ENCODE measurements at regions of chr17 and their contacts with region 1.

Region 1: GRCh38 chr17:63425482-63425881 is 20.6 kb downstream of the CYB561 start:
- DNase-seq: peak; percentile 55 to 87 (median 62)
- ATAC-seq: peak; percentile 90
- H3K4me3 ChIP-seq: no peak overlapping the region
- H3K4me3 Mint-ChIP-seq: no peak overlapping the region
- H3K27ac ChIP-seq: no peak overlapping the region
- H3K27ac Mint-ChIP-seq: no peak overlapping the region
- H3K4me1 ChIP-seq: peaks cover 51% of the 10 kb centered on the region
- H3K4me1 Mint-ChIP-seq: peaks cover 38% of the 10 kb centered on the region
- H3K27me3 ChIP-seq: no peaks in the 10 kb centered on the region
- H3K27me3 Mint-ChIP-seq: no peaks in the 10 kb centered on the region
- CTCF ChIP-seq: peak; percentile 97

Region 2: DNA sequence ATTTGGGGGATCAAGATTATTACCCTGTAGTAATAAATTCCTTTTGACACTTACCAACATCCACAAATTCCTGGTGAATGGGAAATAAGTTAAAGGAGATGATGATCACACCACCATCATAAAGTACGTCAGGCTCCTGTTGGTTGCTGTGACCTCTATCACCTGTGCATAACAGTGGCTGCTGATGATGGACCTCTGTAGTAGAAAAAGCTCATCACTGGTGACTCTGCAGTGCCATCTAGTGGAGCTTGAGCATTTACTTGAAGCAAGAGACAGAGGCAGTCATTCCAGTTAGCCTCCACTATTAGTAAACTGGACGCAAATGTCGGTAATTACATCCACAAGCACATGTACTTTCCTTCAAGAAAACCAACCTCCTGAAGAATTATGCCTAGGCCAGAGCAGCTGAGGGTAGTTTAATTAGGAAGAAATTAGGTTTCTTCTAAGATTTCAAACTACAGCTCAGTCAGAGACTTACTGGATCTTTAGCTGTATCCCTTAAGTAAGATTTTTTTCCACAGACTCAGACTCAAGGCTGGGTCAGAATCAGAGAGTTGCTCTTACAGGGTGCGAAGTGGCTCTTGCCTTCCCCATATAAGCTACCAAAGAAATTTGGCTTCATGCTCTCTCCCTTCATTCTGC is 18.7 kb before region 1 on chr17:
- CTCF ChIA-PET with region 1: interaction called, 15 read pairs
- POLR2A ChIA-PET with region 1: interaction called, 3 read pairs
- intact Hi-C with region 1: no loop called
- DNase-seq: peak; percentile 28 to 88 (median 56)
- ATAC-seq: peak; percentile 78
- H3K4me3 ChIP-seq: no peak overlapping the region
- H3K4me3 Mint-ChIP-seq: no peak overlapping the region
- H3K27ac ChIP-seq: no peak overlapping the region
- H3K27ac Mint-ChIP-seq: no peak overlapping the region
- H3K4me1 ChIP-seq: no peaks in the 10 kb centered on the region
- H3K4me1 Mint-ChIP-seq: peaks cover 5% of the 10 kb centered on the region
- H3K27me3 ChIP-seq: no peaks in the 10 kb centered on the region
- H3K27me3 Mint-ChIP-seq: no peaks in the 10 kb centered on the region
- CTCF ChIP-seq: peak; percentile 82

Region 3: DNA sequence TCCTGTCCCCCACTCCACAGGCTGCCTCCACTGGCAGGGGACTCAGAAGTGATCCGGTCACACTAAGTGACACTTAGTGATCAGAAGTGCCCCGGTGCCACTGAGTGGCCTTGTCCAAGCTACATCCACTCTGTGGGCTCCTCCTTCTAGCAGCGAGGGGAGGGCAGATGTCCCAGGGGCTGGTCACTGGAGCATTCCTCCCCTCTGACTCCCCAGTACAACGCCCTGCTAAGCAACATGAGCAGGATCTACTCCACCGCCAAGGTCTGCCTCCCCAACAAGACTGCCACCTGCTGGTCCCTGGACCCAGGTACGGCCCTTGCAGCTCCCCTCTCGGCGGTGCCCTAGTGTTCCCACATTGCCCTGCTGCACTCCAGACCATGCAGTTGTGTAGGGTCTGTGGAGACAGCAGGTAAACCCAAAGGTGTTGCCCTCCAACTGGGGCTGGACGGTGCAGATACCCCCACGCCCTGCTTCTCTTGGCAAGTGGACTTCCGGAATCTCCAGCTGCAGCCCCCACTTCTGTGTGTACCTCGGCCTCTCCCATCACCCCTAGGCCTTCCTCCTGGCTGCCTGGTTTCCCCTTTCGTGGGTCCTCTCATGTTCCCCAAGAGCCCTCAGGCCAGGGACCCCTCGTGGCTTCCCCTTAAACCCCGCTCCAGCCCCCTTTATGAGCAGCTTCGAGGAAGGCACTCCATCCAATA is 53.5 kb after region 1 on chr17:
- CTCF ChIA-PET with region 1: interaction called, 70 read pairs
- POLR2A ChIA-PET with region 1: interaction called, 31 read pairs
- intact Hi-C with region 1: loop called (anchors 1 kb)
- DNase-seq: peak; percentile 66 to 88 (median 70)
- ATAC-seq: peak; percentile 81
- H3K4me3 ChIP-seq: no peak overlapping the region
- H3K4me3 Mint-ChIP-seq: peak overlapping the region; percentile 64
- H3K27ac ChIP-seq: no peak overlapping the region
- H3K27ac Mint-ChIP-seq: no peak overlapping the region
- H3K4me1 ChIP-seq: peaks cover 26% of the 10 kb centered on the region
- H3K4me1 Mint-ChIP-seq: peaks cover 14% of the 10 kb centered on the region
- H3K27me3 ChIP-seq: peaks cover 10 to 11% of the 10 kb centered on the region in 2 experiments
- H3K27me3 Mint-ChIP-seq: peaks cover 35% of the 10 kb centered on the region
- CTCF ChIP-seq: peak; percentile 61

Region 4: DNA sequence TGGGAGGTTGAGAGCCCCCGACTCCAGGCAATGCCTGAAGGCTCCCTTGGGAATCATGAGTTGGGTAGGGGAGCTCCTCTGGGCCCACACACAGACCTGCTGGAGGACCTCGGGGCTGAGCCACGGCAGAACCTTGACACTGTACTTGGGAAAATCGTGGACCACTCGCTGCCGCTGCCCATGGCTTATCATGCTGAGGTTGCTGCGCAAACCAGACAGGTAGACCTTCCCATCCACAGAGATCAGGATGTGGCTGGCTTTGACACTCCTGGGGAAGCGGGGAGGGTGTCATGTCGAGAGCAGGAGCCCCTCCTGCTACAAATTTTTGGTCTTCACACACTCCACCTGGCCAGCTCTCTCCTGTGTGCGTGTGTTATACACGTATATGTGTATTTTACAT is 281.7 kb after region 1 on chr17:
- CTCF ChIA-PET with region 1: interaction called, 13 read pairs
- POLR2A ChIA-PET with region 1: no interaction called
- intact Hi-C with region 1: loop called (anchors 2 kb)
- DNase-seq: peak in 6 of 14 experiments; percentile 28 to 79 (median 54)
- ATAC-seq: peak; percentile 57
- H3K4me3 ChIP-seq: peak overlapping the region; percentile 39
- H3K4me3 Mint-ChIP-seq: peak overlapping the region; percentile 75
- H3K27ac ChIP-seq: peak overlapping the region; percentile 69 to 70
- H3K27ac Mint-ChIP-seq: peak overlapping the region; percentile 100
- H3K4me1 ChIP-seq: peaks cover 86% of the 10 kb centered on the region
- H3K4me1 Mint-ChIP-seq: peaks cover 83% of the 10 kb centered on the region
- H3K27me3 ChIP-seq: no peaks in the 10 kb centered on the region
- H3K27me3 Mint-ChIP-seq: no peaks in the 10 kb centered on the region
- CTCF ChIP-seq: no peak

Region 5: GRCh38 chr17:63834431-63835166 is 409.1 kb after region 1 on chr17:
- CTCF ChIA-PET with region 1: no interaction called
- POLR2A ChIA-PET with region 1: no interaction called
- intact Hi-C with region 1: loop called in 1 of 2 experiments (anchors 10 kb)
- DNase-seq: peak in 13 of 14 experiments; percentile 40 to 88 (median 55)
- ATAC-seq: peak; percentile 88
- H3K4me3 ChIP-seq: no peak overlapping the region
- H3K4me3 Mint-ChIP-seq: peak overlapping the region; percentile 65
- H3K27ac ChIP-seq: no peak overlapping the region
- H3K27ac Mint-ChIP-seq: peak overlapping the region; percentile 45
- H3K4me1 ChIP-seq: peaks cover 75% of the 10 kb centered on the region
- H3K4me1 Mint-ChIP-seq: peaks cover 61% of the 10 kb centered on the region
- H3K27me3 ChIP-seq: no peaks in the 10 kb centered on the region
- H3K27me3 Mint-ChIP-seq: no peaks in the 10 kb centered on the region
- CTCF ChIP-seq: peak; percentile 57